CD14-positive monocyte (primary cell): ENCODE measurements at regions of chr10 and their contacts with region 1.

Region 1: GRCh38 chr10:95445837-95446486 is 115.2 kb downstream of the SORBS1 start:
- DNase-seq: peak; percentile 19 to 49 (median 29)
- H3K4me3 ChIP-seq: no peak overlapping the region
- H3K4me3 Mint-ChIP-seq: no peak overlapping the region
- H3K27ac ChIP-seq: no peak overlapping the region
- H3K27ac Mint-ChIP-seq: no peak overlapping the region
- H3K4me1 ChIP-seq: no peaks in the 10 kb centered on the region
- H3K4me1 Mint-ChIP-seq: peaks cover 2% of the 10 kb centered on the region
- H3K27me3 ChIP-seq: no peaks in the 10 kb centered on the region
- H3K27me3 Mint-ChIP-seq: peaks cover 0 to 2% (median 2%) of the 10 kb centered on the region in 3 donors
- CTCF ChIP-seq: peak; percentile 92

Region 2: DNA sequence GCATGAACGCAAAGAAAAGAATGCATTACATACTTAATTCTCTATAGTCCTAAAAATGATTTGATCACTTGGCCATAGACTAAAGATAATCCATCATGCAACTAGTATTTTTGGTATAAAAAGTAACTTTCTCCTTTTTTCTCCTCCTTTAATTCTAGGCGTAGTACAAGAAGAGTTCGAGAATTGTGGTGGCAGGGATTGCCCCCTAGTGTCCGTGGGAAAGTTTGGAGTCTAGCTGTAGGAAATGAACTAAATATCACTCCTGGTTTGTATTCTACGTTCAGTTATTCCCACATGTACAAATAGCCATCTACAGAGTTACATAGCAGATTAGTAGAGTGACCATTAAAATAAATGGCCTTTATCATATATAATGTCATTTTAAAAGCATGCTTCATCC is 945.9 kb before region 1 on chr10:
- intact Hi-C with region 1: no loop called
- DNase-seq: no peak
- H3K4me3 ChIP-seq: no peak overlapping the region
- H3K4me3 Mint-ChIP-seq: no peak overlapping the region
- H3K27ac ChIP-seq: no peak overlapping the region
- H3K27ac Mint-ChIP-seq: no peak overlapping the region
- H3K4me1 ChIP-seq: no peaks in the 10 kb centered on the region
- H3K4me1 Mint-ChIP-seq: peaks cover 2% of the 10 kb centered on the region
- H3K27me3 ChIP-seq: no peaks in the 10 kb centered on the region
- H3K27me3 Mint-ChIP-seq: no peaks in the 10 kb centered on the region
- CTCF ChIP-seq: no peak

Region 3: DNA sequence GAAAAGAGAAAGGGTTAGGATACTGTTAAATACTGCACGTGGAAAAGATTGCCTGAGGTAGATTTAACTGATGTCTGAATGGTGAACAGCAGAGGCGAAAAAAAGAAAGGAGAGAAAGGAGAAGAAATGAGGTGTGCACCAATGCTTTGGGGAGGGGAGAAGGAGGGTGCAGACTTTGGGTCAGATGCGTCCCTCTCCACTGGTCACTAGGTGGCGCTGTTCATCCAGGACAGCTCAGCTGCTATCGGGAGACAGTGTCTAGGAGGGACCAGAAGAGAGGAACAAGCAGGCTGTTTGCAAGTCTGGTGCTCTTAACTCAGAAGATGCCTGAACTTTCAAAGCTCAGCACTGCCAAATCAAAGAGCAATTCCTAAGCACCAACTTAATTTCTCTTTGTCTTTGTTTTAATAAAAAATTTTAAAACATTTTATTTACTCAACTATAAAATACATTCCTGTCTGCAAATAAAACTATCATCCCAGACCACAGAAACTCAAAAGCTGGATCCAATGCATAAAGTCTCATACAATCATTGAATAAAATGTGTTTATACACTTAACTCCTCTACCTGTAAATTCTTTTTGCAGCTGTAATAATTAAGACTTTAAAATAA is 71.3 kb before region 1 on chr10:
- intact Hi-C with region 1: loop called in 1 of 2 experiments (anchors 5 kb)
- DNase-seq: peak; percentile 58 to 79 (median 61)
- H3K4me3 ChIP-seq: no peak overlapping the region
- H3K4me3 Mint-ChIP-seq: no peak overlapping the region
- H3K27ac ChIP-seq: no peak overlapping the region
- H3K27ac Mint-ChIP-seq: no peak overlapping the region
- H3K4me1 ChIP-seq: no peaks in the 10 kb centered on the region
- H3K4me1 Mint-ChIP-seq: no peaks in the 10 kb centered on the region
- H3K27me3 ChIP-seq: no peaks in the 10 kb centered on the region
- H3K27me3 Mint-ChIP-seq: peaks cover 1 to 13% (median 2%) of the 10 kb centered on the region in 3 donors
- CTCF ChIP-seq: peak; percentile 87

Region 4: GRCh38 chr10:95741807-95742467 is 296.0 kb after region 1 on chr10:
- intact Hi-C with region 1: no loop called
- DNase-seq: no peak
- H3K4me3 ChIP-seq: peak overlapping the region in 1 of 3 experiments; percentile 10
- H3K4me3 Mint-ChIP-seq: peak overlapping the region in 1 of 2 donors; percentile 65
- H3K27ac ChIP-seq: peak overlapping the region in 1 of 2 donors; percentile 67
- H3K27ac Mint-ChIP-seq: peak overlapping the region; percentile 16 to 90 (median 76)
- H3K4me1 ChIP-seq: peaks cover 13 to 15% of the 10 kb centered on the region in 2 donors
- H3K4me1 Mint-ChIP-seq: peaks cover 27% of the 10 kb centered on the region
- H3K27me3 ChIP-seq: no peaks in the 10 kb centered on the region
- H3K27me3 Mint-ChIP-seq: peaks cover 0 to 1% (median 0%) of the 10 kb centered on the region in 3 donors
- CTCF ChIP-seq: no peak